Body of pancreas (tissue), 4 donors: ENCODE measurements at regions of chr7 and their contacts with region 1.

Region 1: GRCh38 chr7:30974605-30975255 is 11.0 kb downstream of the GHRHR start:
- DNase-seq: peak; percentile 79 to 84 (median 81)
- ATAC-seq: peak; percentile 95
- H3K4me3 ChIP-seq: no peak overlapping the region
- H3K27ac ChIP-seq: peak overlapping the region in 3 of 4 donors; percentile 54 to 67 (median 65)
- H3K4me1 ChIP-seq: peaks cover 28% of the 10 kb centered on the region
- H3K27me3 ChIP-seq: no peaks in the 10 kb centered on the region
- CTCF ChIP-seq: peak; percentile 73 to 90 (median 82)
- POLR2A ChIP-seq: peak in 1 of 3 donors; percentile 13

Region 2: GRCh38 chr7:30800785-30801252 is 173.9 kb before region 1 on chr7:
- intact Hi-C with region 1: loop called (anchors 5 kb)
- DNase-seq: peak; percentile 66 to 75 (median 72)
- ATAC-seq: peak; percentile 77
- H3K4me3 ChIP-seq: no peak overlapping the region
- H3K27ac ChIP-seq: no peak overlapping the region
- H3K4me1 ChIP-seq: peaks cover 11% of the 10 kb centered on the region
- H3K27me3 ChIP-seq: no peaks in the 10 kb centered on the region
- CTCF ChIP-seq: peak; percentile 37 to 89 (median 85)
- POLR2A ChIP-seq: no peak

Region 3: GRCh38 chr7:31104361-31105255 is 129.9 kb after region 1 on chr7:
- intact Hi-C with region 1: no loop called
- DNase-seq: no peak
- ATAC-seq: no peak
- H3K4me3 ChIP-seq: no peak overlapping the region
- H3K27ac ChIP-seq: no peak overlapping the region
- H3K4me1 ChIP-seq: no peaks in the 10 kb centered on the region
- H3K27me3 ChIP-seq: no peaks in the 10 kb centered on the region
- CTCF ChIP-seq: no peak
- POLR2A ChIP-seq: no peak